ENCODE measurements at regions of chr18 and their contacts with region 1.

Region 1: GRCh38 chr18:46281185-46282176 is 177.3 kb downstream of the HAUS1 start:
- DNase-seq: peak; percentile 63 to 88 (median 75)
- H3K4me3 ChIP-seq: no peak overlapping the region
- H3K27ac ChIP-seq: no peak overlapping the region
- H3K4me1 ChIP-seq: peaks cover 0 to 3% of the 10 kb centered on the region in 2 donors
- H3K27me3 ChIP-seq: no peaks in the 10 kb centered on the region
- CTCF ChIP-seq: peak; percentile 83 to 94 (median 91)
- POLR2A ChIP-seq: no peak

Region 2: GRCh38 chr18:45962461-45962860 is 319.0 kb before region 1 on chr18:
- intact Hi-C with region 1: no loop called
- DNase-seq: peak in 3 of 7 donors; percentile 17 to 37 (median 24)
- H3K4me3 ChIP-seq: no peak overlapping the region
- H3K27ac ChIP-seq: no peak overlapping the region
- H3K4me1 ChIP-seq: peaks cover 21 to 34% of the 10 kb centered on the region in 2 donors
- H3K27me3 ChIP-seq: no peaks in the 10 kb centered on the region
- CTCF ChIP-seq: no peak
- POLR2A ChIP-seq: no peak

Region 3: GRCh38 chr18:46173393-46174341 is 107.8 kb before region 1 on chr18:
- intact Hi-C with region 1: loop called in 1 of 2 experiments (anchors 10 kb)
- DNase-seq: peak; percentile 91 to 96 (median 93)
- H3K4me3 ChIP-seq: peak overlapping the region; percentile 79 to 100 (median 86)
- H3K27ac ChIP-seq: peak overlapping the region; percentile 72 to 90 (median 87)
- H3K4me1 ChIP-seq: peaks cover 10 to 19% of the 10 kb centered on the region in 2 donors
- H3K27me3 ChIP-seq: no peaks in the 10 kb centered on the region
- CTCF ChIP-seq: peak; percentile 64 to 90 (median 82)
- POLR2A ChIP-seq: peak in 1 of 2 donors; percentile 80

Region 4: DNA sequence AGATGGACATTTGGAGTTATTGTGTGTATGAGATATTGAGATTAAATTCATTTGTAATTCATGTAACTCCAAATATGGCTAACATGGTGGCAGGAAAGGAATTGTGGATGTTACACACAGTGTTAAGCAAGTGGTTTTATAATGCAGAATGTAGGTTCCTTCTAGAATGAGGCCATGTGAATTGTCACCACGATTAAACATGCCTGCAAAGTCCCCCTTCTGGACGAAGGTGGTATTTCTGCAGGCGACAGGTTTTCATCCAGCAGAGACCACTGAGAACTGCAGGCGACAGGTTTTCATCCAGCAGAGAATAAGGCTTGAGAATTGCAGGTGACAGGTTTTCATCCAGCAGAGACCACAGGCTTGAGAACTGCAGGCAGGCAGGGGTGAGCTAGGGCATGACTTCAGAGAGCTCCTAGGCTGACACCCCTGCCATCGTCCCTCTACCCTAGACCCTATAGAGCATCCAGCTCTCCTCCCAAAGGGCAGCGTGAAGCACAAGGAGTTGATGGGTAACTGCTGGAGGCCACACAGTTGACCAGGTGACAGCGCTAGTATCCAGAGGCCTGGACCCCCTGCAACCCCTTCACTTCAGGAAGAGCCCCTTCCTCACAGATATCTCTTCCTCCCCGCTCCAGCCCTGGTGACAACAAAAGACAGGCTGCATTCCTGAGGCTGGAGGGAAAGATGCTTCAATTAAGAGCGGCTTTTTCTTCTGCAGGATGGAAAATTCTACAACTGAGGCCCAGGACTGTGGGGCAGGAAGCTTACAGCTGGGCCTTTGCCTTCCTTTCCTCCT is 199.8 kb after region 1 on chr18:
- intact Hi-C with region 1: loop called in 1 of 2 experiments (anchors 5 kb)
- DNase-seq: peak; percentile 24 to 81 (median 43)
- H3K4me3 ChIP-seq: no peak overlapping the region
- H3K27ac ChIP-seq: no peak overlapping the region
- H3K4me1 ChIP-seq: no peaks in the 10 kb centered on the region
- H3K27me3 ChIP-seq: no peaks in the 10 kb centered on the region
- CTCF ChIP-seq: peak; percentile 54 to 76 (median 73)
- POLR2A ChIP-seq: no peak

Region 5: GRCh38 chr18:46657115-46657955 is 375.9 kb after region 1 on chr18 and contains the start of gene LOXHD1:
- intact Hi-C with region 1: loop called (anchors 5 to 10 kb)
- DNase-seq: no peak
- H3K4me3 ChIP-seq: no peak within 1 kb of the TSS
- H3K27ac ChIP-seq: no peak within 1 kb of the TSS
- H3K4me1 ChIP-seq: no peaks in the 10 kb centered on the region
- H3K27me3 ChIP-seq: no peaks in the 10 kb centered on the region
- CTCF ChIP-seq: no peak
- POLR2A ChIP-seq: no peak
- total RNA-seq, gene LOXHD1: 0.28 to 0.30 TPM in 2 of 9 donors, not detected in the others